ENCODE measurements at regions of chr22 and their contacts with region 1.

Region 1: DNA sequence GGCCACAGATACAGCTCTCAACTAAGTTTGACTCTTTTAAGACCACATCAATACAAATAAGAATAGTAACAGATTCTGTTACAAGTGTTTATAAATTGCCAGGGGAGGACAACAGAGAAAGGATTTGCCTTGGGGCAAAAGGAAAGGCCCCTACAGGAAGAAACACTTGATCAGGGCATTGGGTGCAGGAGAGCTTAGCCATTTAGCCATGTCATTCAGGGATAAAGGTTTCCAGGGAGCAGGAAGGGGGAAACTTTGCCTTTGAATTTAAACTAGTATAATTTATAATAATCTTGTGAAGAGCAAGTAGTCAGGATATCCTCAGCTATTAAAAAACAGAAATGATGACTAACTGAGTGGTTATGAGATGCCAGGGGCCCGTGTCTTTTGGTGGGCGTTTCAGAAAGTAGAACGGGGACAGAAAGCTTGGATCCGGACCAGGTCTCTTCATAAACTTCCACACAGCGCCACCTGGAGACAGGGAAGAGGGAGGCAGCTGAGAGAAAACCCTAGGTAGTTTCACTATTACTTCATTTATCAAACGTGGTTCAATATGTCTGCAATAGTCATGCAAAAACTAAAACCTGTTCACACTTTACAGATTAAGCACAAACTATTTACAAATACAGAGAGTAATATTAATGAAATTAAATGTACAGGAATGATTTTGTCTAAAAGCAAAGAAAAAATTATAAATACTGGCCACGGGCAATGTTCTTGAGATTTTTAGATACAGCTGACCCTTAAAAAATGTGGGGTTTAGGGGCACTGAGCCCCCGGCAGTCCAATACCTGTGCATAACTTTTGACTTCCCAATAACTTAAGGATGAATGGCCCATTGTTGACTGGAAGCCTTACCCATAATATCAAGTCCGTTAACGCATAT is 11.0 kb upstream of the SLC5A4 start:
- DNase-seq: peak; percentile 67
- ATAC-seq: peak; percentile 85
- H3K4me3 ChIP-seq: no peak overlapping the region
- H3K27ac ChIP-seq: no peak overlapping the region
- H3K4me1 ChIP-seq: no peaks in the 10 kb centered on the region
- H3K27me3 ChIP-seq: no peaks in the 10 kb centered on the region; the same call in 1 of the 2 replicates
- CTCF ChIP-seq: peak; percentile 87
- POLR2A ChIP-seq: no peak
- RAD21 ChIP-seq: peak; percentile 56

Region 2: DNA sequence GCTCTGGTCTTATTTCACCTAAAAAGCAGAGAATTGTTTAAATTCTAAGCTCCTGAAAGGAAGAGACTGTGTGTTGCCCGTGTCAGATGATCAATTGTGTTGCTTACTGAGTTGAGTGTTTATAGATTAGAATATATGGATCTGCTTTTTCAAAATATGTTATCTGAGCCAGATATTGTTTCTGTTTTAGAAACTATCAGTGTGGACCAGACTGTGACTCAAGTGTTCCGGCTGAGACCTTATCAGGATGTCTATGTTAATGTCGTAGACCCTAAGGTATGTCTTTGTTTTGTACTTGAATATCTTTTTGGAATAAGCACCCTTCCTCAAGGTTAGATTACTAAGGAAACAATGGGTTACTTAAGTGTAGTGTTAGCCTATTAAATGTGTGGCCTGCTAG is 501.3 kb before region 1 on chr22:
- CTCF ChIA-PET with region 1: no interaction called
- POLR2A ChIA-PET with region 1: no interaction called
- dilution Hi-C with region 1: no loop called
- in situ Hi-C with region 1: no loop called
- intact Hi-C with region 1: no loop called
- DNase-seq: no peak
- ATAC-seq: no peak
- H3K4me3 ChIP-seq: no peak overlapping the region
- H3K27ac ChIP-seq: no peak overlapping the region
- H3K4me1 ChIP-seq: no peaks in the 10 kb centered on the region
- H3K27me3 ChIP-seq: no peaks in the 10 kb centered on the region
- CTCF ChIP-seq: no peak
- POLR2A ChIP-seq: no peak
- RAD21 ChIP-seq: no peak

Region 3: DNA sequence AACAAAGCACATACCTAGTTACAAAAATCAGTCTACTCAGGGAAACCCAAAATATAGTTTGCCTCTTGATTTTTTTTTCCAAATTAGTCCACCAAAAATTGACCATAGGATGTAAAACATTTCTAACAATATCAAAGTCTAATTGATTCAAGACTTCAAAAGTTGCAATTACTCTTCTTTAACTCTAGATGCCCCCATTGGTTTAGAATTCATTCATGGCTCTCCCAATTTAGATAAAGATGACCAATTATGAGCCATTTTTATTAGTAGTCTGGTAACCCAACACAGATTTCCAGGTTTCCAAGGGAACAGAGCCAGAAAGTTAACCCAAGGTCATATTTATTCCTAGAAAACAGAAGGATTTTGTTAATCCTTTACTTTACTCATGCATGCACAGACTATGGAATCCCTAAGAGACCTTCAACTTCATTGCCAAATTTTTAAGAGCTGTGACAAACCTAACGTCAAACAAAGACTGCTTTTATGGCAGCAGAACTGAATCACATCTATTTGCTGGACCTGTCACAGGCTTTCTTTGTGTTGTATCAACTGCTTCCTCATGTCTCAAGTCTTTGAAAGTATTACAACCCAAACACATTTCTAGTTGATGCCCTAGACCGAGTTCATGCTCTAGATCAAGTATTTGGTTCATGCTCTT is 162.3 kb before region 1 on chr22:
- CTCF ChIA-PET with region 1: no interaction called
- POLR2A ChIA-PET with region 1: no interaction called
- dilution Hi-C with region 1: no loop called
- in situ Hi-C with region 1: no loop called
- intact Hi-C with region 1: loop called (anchors 5 kb)
- DNase-seq: peak; percentile 3
- ATAC-seq: no peak
- H3K4me3 ChIP-seq: no peak overlapping the region
- H3K27ac ChIP-seq: no peak overlapping the region
- H3K4me1 ChIP-seq: no peaks in the 10 kb centered on the region
- H3K27me3 ChIP-seq: 0 out of 2 replicates have a peak, but pooled peaks cover 3% of the 10 kb centered on the region
- CTCF ChIP-seq: peak; percentile 37
- POLR2A ChIP-seq: no peak
- RAD21 ChIP-seq: peak; percentile 47